Sciatic nerve (tissue), 2 donors: ENCODE measurements at regions of chr10 and their contacts with region 1.

Region 1: DNA sequence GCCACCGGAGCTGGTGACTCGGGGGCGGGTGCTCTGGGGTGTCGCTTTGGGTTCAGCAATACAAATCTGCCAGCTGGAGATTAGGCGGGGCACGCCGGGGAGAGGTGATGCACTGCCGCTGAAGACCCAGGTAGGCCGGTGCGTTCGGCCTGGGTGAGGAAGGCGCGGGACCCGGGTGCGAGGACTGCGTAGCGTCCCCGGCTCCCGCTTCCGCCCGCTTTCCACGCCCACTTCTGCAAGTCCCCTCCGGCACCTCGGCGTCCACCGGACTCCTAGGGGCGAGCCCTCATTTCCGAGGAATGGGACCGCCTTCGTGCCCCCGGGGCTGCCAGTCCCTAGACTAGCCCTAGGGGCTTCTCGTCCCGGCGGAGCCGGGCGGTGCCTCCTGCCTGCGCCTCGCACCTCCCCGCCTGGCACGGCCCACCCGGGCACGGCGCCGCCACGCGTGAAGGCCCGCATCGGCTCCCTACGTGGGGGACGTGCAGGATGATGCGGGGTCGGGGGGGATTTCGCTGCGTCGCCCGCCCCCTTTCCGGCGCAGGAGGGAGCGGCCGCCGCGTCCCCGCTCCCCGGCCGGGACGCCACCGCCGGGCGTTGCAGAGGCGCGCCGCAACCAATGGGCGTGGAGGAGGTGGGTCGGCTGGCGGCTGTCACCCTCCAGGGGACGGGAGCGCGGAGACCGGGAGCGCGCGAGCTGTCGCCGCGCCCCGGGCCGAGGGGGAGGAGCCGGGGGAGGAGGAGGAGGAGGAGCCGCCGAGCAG is 40.0 kb downstream of the HK1 start:
- DNase-seq: peak; percentile 93
- ATAC-seq: peak; percentile 94

Region 2: GRCh38 chr10:69243817-69244216 is 74.5 kb before region 1 on chr10:
- intact Hi-C with region 1: loop called (anchors 2 kb)
- DNase-seq: no peak
- ATAC-seq: no peak

Region 3: DNA sequence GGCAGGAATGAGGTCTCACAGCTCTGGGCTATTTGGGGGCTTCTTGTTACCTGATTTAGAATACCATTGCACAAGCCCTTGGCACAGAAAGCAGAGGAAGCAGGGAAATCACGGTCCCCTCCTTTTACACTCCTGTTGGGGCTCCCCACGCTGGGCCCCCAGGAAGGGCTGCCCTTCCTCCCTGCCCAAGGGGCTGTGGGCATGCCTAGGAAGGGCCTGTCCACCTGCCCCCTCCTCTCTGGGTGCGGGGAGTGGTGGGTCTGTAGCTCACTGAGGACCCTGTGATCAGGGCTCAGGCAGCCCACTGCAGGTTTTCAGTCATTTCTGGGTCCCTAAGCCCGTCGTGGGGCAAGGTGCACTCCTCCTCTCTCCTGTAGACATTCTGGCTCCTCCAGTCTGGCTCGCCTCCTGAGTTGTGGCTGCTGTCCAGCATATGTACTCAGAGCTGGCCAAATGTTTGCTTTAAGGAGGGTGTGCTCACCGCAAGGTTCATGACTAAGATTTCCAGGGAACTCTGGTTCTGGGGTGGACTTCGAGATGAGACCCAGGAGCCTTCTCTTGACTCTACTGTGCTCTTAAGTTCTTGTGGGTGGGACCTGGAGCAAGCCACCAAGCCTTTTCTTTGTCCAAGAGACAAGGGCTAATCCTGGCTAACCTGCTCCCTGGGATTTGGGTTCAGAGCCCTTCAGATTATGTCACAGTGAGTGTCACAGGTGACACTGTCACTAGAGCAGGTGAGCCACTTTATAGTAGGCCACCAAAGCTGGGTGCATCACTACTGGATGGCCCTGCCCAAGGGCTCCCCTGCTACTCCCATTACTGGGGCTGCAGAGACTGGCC is 42.4 kb after region 1 on chr10:
- intact Hi-C with region 1: no loop called
- DNase-seq: peak; percentile 72
- ATAC-seq: peak; percentile 95